Common myeloid progenitor, CD34-positive (primary cell): ENCODE measurements at regions of chr6 and their contacts with region 1.

Region 1: DNA sequence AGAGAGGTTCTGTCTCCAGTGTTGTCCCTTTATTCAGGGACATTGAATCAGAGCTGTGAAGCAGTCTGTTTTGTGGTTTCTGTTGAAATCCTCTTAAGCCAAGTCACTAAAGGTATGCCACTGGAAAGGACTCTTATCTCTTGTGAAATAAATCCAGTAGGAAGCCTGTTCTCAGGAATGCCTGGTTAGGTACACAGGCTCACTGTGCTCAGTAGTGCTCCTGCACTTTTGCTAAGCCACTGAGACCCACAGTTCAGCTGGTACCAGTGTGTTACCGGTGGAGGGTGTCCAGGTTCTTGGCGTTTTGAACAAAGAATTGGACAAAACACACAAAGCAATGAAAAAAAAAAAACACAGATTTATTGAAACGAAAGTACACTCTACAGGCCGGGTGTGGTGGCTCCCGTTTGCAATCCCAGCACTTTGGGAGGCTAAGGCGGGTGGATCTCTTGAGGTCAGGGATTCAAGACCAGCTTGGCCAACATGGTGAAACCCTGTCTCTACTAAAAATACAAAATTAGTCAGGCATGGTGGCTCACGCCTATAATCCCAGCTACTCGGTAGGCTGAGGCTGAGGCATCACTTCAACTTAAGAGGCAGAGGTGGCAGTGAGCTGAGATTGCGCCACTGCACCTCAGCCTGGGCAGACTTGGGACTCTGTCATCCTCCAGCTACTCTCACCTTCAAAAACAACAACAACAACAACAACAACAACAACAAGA is 186.1 kb downstream of the JARID2 start:
- DNase-seq: no peak
- H3K4me3 ChIP-seq: no peak overlapping the region
- H3K27ac ChIP-seq: no peak overlapping the region
- H3K4me1 ChIP-seq: peaks cover 23 to 91% (median 60%) of the 10 kb centered on the region in 4 experiments
- H3K27me3 ChIP-seq: no peaks in the 10 kb centered on the region

Region 2: GRCh38 chr6:15413466-15414234 is 18.3 kb before region 1 on chr6:
- CTCF ChIA-PET with region 1: interaction called, 13 read pairs
- POLR2A ChIA-PET with region 1: no interaction called
- DNase-seq: no peak
- H3K4me3 ChIP-seq: no peak overlapping the region
- H3K27ac ChIP-seq: no peak overlapping the region
- H3K4me1 ChIP-seq: peaks cover 21 to 68% (median 57%) of the 10 kb centered on the region in 4 experiments
- H3K27me3 ChIP-seq: no peaks in the 10 kb centered on the region

Region 3: GRCh38 chr6:15420959-15421438 is 10.9 kb before region 1 on chr6:
- CTCF ChIA-PET with region 1: interaction called, 10 read pairs
- POLR2A ChIA-PET with region 1: interaction called, 3 read pairs
- DNase-seq: peak in 2 of 3 donors; percentile 88 to 93
- H3K4me3 ChIP-seq: peak overlapping the region in 3 of 7 experiments; percentile 47 to 54 (median 49)
- H3K27ac ChIP-seq: peak overlapping the region in 1 of 2 experiments; percentile 64
- H3K4me1 ChIP-seq: peaks cover 18 to 50% (median 49%) of the 10 kb centered on the region in 4 experiments
- H3K27me3 ChIP-seq: no peaks in the 10 kb centered on the region